Right cardiac atrium (tissue), 5 donors: ENCODE measurements at regions of chr1 and their contacts with region 1.

Region 1: DNA sequence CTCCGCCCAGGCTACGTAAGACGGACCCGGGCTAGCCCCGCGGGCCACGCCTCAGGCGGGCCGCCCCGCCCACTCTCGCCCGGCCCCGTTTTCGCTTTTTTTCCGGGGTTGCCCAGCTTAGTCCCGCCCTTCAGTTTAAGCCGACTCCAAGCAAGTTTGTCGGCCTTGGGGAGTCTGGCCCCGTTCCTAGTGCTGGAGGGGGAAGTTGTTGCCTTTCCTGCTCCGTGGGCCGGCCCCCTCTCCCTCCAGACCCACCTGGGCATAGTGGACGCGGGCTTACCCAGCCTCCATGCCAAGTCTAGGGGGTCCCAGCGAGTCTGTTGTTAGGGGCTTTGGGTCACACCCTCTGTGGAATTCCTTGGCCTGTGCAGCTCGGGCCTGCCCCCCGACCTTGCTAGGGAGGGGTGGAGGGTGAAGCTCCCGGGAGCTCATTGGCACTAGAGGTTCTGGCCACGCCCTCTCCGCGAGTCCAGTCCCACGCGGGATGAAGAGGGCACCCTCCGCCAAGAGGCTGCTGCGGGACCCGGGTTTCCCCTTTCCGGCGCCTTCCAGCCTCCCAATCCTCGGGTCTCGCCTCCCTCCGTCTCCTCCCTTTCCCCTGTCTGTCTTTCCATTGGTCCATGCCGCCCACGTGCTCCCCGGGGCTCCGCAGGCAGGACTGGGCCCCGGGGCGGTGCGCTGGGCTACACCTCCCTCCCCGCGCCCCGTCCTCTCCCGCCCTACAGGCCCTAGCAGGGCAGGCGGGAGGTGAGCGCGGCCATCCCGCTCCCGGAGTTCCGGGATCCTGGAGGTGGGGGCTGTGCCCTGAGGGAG is 3.3 kb downstream of the RUSC1 start:
- DNase-seq: peak; percentile 97 to 98 (median 98)
- ATAC-seq: peak; percentile 88 to 89
- H3K4me3 ChIP-seq: peak overlapping the region; percentile 72
- H3K27ac ChIP-seq: peak overlapping the region; percentile 88
- H3K4me1 ChIP-seq: peaks cover 4% of the 10 kb centered on the region
- H3K27me3 ChIP-seq: no peaks in the 10 kb centered on the region

Region 2: DNA sequence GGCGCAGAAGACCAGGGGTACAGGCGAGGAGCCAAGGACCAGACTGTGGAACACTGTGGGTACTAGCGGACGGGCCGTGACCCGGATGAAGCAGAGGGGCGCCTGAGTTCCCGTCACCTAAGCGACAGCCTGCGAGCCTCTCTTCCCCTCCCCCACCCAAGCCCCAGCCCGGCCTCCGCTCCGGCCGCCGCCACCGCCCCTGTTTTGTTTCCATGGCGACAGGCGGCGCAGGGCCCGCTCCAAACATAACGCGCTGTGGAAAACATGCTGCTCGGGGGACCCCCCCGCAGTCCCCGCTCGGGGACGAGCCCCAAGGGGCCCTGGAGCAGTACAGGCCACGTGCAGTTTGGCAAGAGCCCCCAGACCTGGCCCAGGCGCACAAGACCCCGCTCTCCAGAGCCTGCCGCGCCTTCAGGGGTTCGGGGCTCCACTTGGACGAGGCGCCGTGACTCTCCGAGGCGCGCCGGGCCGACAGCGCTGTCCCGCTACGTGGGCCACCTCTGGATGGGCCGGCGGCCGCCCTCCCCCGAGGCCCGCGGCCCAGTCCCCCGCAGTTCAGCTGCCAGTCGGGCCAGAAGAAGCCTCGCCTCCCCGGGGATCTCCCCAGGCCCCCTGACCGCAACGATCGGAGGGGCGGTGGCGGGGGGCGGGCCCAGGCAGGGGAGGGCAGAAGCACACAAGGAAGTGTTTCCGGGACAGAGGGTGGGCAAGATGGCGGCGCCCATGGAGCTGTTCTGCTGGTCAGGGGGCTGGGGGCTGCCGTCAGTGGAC is 115.3 kb before region 1 on chr1 and contains the start of gene MTX1:
- intact Hi-C with region 1: no loop called
- DNase-seq: peak; percentile 96 to 98 (median 98)
- ATAC-seq: peak; percentile 85 to 87
- H3K4me3 ChIP-seq: peak within 1 kb of the TSS; percentile 88
- H3K27ac ChIP-seq: peak within 1 kb of the TSS; percentile 100
- H3K4me1 ChIP-seq: peaks cover 5% of the 10 kb centered on the region
- H3K27me3 ChIP-seq: no peaks in the 10 kb centered on the region
- total RNA-seq, gene MTX1: 20.1 to 24.3 (median 21.1) TPM

Region 3: GRCh38 chr1:155250633-155251449 is 73.2 kb before region 1 on chr1:
- intact Hi-C with region 1: loop called in 3 of 4 experiments (anchors 5 kb)
- DNase-seq: peak; percentile 93 to 97 (median 97)
- ATAC-seq: peak; percentile 78 to 81
- H3K4me3 ChIP-seq: no peak overlapping the region
- H3K27ac ChIP-seq: no peak overlapping the region
- H3K4me1 ChIP-seq: peaks cover 9% of the 10 kb centered on the region
- H3K27me3 ChIP-seq: no peaks in the 10 kb centered on the region

Region 4: DNA sequence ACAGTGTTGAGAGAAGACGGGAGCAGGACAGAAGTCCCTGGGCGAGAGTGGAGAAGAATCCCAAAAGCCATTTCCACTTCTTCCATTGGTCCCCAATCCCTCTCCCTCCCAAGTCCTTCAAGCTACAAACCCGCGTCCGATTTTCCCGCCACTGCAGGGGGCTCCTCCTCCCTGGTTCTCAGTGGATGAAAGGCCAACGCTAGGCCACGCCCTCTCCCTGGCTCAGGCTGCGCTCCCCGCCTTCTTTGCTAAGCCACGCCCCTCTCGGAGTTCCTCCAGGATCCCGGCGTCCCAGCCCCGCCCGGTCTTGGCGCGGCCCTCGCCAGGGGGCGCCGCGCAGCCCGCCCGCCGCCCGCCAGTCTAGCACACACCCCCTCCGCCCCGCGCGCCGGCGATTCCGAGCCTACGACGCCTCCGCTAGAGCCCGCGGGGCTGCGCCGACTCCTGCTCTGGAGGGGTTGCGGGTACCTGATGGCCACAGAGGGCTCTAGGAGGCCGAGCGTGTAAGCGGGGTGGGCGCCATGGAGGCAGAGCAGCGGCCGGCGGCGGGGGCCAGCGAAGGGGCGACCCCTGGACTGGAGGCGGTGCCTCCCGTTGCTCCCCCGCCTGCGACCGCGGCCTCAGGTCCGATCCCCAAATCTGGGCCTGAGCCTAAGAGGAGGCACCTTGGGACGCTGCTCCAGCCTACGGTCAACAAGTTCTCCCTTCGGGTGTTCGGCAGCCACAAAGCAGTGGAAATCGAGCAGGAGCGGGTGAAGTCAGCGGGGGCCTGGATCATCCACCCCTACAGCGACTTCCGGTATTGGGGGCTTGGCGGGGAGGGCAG is 46.7 kb before region 1 on chr1 and contains the start of gene HCN3:
- intact Hi-C with region 1: loop called (anchors 5 kb)
- DNase-seq: peak; percentile 98 to 99 (median 99)
- ATAC-seq: peak; percentile 86 to 91
- H3K4me3 ChIP-seq: peak within 1 kb of the TSS; percentile 62
- H3K27ac ChIP-seq: peak within 1 kb of the TSS; percentile 6
- H3K4me1 ChIP-seq: no peaks in the 10 kb centered on the region
- H3K27me3 ChIP-seq: no peaks in the 10 kb centered on the region
- total RNA-seq, gene HCN3: 0.92 to 1.4 (median 1.1) TPM

Region 5: DNA sequence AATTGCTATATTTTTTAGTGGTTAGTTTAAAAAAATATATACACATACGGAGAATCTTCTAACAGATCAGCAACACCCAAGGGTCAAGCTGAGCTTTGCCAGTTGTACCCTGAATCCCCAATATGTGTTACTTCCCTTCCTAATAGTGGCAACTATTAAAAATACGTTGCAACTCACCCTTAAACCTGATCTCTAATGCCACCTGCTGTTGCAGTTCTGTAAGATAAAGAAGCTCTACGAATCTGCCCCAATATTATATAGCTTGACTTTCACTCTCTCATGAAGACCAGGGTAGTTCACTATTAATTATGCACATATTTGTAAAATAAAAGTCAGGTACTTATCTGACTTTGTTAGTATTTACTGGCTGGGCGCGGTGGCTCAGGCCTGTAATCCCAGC is 180.2 kb after region 1 on chr1:
- intact Hi-C with region 1: loop called in 1 of 4 experiments (anchors 10 kb)
- DNase-seq: no peak
- ATAC-seq: peak; percentile 31 to 54
- H3K4me3 ChIP-seq: no peak overlapping the region
- H3K27ac ChIP-seq: no peak overlapping the region
- H3K4me1 ChIP-seq: peaks cover 5% of the 10 kb centered on the region
- H3K27me3 ChIP-seq: no peaks in the 10 kb centered on the region

Region 6: DNA sequence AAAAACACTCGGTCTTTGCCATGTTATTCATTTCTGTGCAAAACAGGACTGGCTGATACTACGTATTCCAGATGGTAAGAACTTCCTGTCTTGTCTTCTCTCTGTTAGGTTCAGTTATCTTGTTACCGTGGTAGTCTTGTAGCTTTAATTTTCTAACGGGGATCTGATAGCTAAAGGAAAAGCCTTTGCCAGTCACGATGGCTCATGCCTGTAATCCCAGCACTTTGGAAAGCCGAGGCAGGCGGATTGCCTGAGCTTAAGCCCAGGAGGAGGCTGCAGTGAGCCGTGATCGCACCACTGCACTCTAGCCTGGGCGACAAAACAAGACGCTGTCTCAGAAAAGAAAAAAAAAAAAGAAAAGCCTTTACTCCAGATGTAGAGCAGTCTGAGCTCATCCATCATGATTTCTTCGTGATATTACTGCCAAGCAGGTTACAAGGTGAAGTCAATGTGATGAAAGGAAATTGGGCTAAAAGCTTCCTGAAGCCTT is 274.9 kb after region 1 on chr1:
- intact Hi-C with region 1: no loop called
- DNase-seq: peak in 2 of 3 donors; percentile 39 to 63
- ATAC-seq: peak; percentile 38 to 54
- H3K4me3 ChIP-seq: no peak overlapping the region
- H3K27ac ChIP-seq: no peak overlapping the region
- H3K4me1 ChIP-seq: no peaks in the 10 kb centered on the region
- H3K27me3 ChIP-seq: no peaks in the 10 kb centered on the region